ENCODE measurements at regions of chr19 and their contacts with region 1.

Region 1: GRCh38 chr19:5665796-5666513 is 14.4 kb downstream of the MICOS13 start:
- DNase-seq: peak; percentile 84
- ATAC-seq: peak; percentile 85
- H3K4me3 ChIP-seq: no peak overlapping the region
- H3K27ac ChIP-seq: no peak overlapping the region
- H3K4me1 ChIP-seq: no peaks in the 10 kb centered on the region
- H3K27me3 ChIP-seq: no peaks in the 10 kb centered on the region
- CTCF ChIP-seq: peak; percentile 40
- POLR2A ChIP-seq: no peak
- RAD21 ChIP-seq: 0 out of 2 replicates have a peak, but pooled peaks have one; percentile 17

Region 2: GRCh38 chr19:5387472-5387871 is 278.5 kb before region 1 on chr19:
- CTCF ChIA-PET with region 1: no interaction called
- POLR2A ChIA-PET with region 1: no interaction called
- dilution Hi-C with region 1: no loop called
- in situ Hi-C with region 1: no loop called
- intact Hi-C with region 1: no loop called
- DNase-seq: no peak
- ATAC-seq: no peak
- H3K4me3 ChIP-seq: no peak overlapping the region
- H3K27ac ChIP-seq: no peak overlapping the region
- H3K4me1 ChIP-seq: no peaks in the 10 kb centered on the region
- H3K27me3 ChIP-seq: peaks cover 13% of the 10 kb centered on the region
- CTCF ChIP-seq: no peak
- POLR2A ChIP-seq: no peak
- RAD21 ChIP-seq: no peak

Region 3: GRCh38 chr19:5622463-5623396 is 43.2 kb before region 1 on chr19 and contains the starts of genes SAFB and SAFB2:
- CTCF ChIA-PET with region 1: no interaction called
- POLR2A ChIA-PET with region 1: no interaction called
- dilution Hi-C with region 1: no loop called
- in situ Hi-C with region 1: no loop called
- intact Hi-C with region 1: loop called (anchors 5 kb)
- DNase-seq: peak; percentile 100
- ATAC-seq: peak; percentile 92
- H3K4me3 ChIP-seq: peak within 1 kb of the TSS; percentile 64
- H3K27ac ChIP-seq: peak within 1 kb of the TSS; percentile 82
- H3K4me1 ChIP-seq: peaks cover 18% of the 10 kb centered on the region
- H3K27me3 ChIP-seq: no peaks in the 10 kb centered on the region
- CTCF ChIP-seq: no peak; the same call in 1 of the 2 replicates
- POLR2A ChIP-seq: peak; percentile 97
- RAD21 ChIP-seq: no peak
- total RNA-seq, gene SAFB: 18.5 and 26.1 TPM in 2 replicates
- total RNA-seq, gene SAFB2: 11.8 and 17.8 TPM in 2 replicates

Measured in IMR-90 (cell line).